B cell (primary cell): ENCODE measurements at regions of chr11 and their contacts with region 1.

Region 1: DNA sequence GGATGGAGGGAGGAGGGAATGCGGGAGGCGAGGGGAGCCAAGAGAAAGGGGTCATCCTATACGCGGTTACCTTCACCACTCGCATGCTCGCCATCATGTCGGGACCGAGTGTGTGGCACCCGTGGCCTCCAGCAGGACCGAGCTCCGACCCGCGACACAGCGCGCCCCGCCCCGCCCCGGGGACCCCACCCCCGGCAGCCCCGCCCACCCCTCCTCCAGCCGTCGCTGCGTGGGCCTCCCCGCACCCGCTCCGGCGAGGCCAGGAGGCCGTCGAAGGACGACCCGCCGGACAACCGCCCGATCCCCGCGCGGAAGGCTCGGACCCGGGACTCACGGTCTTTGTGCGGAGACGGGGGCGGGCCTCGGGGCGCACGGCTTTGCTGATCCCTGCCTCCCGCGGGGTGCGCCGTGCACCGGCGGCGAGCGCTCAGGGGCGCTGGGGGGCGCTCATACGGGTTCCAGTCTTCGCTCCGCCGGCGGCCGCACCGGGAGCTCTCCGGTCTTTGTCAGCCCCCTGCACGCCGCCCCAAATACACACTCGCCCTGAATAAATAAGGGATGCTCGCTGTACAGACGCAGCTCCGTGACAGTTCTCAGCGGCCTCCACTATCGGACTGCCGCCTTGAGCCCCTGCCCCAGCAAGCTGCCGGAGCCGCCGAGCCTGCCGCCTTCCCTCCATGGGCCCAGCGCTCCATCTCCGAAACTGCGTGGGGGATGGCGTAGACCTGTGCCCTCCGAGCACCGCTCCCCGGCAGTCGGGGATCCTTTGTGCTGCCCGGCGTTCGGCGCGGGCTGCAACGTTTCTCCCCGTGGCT is at the start of gene UBE2L6:
- DNase-seq: peak; percentile 82
- ATAC-seq: peak; percentile 69
- H3K4me3 ChIP-seq: peak within 1 kb of the TSS; percentile 83 to 99 (median 98)
- H3K4me3 Mint-ChIP-seq: peak within 1 kb of the TSS; percentile 99
- H3K27ac ChIP-seq: peak within 1 kb of the TSS; percentile 83 to 92
- H3K27ac Mint-ChIP-seq: peak within 1 kb of the TSS; percentile 99
- H3K4me1 ChIP-seq: peaks cover 18 to 26% of the 10 kb centered on the region in 2 donors
- H3K4me1 Mint-ChIP-seq: peaks cover 36% of the 10 kb centered on the region
- H3K27me3 ChIP-seq: no peaks in the 10 kb centered on the region
- H3K27me3 Mint-ChIP-seq: no peaks in the 10 kb centered on the region
- CTCF ChIP-seq: peak; percentile 95
- total RNA-seq, gene UBE2L6: 66.3 and 70.7 TPM in 2 replicates

Region 2: DNA sequence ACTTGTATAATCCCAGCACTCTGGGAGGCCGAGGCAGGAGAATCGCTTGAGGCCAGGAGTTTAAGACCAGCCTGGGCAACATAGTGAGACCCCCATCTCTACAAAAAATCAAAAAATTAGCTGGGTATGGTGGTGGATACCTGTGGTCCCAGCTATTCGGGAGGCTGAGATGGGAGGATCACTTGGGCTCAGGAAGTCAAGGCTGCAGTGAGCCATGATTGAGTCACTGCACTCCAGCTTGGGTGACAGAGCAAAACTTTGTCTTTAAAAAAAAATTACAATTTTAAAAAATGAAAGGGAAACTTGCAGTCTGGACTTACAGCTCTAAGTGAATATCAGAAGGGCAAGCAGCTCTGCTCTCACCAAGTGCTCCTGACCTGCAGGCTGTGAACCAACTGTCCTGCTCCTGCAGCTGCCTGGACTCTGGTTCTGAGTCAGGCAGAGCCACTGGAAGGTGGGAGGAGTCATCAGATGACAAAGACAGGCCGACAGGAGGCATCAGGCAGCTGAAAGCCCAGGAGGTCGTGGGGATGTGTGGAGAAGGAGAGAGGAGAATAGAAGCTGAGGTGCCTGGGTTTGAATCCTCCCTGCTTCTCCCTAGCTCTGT is 20.8 kb before region 1 on chr11:
- CTCF ChIA-PET with region 1: interaction called, 14 read pairs
- POLR2A ChIA-PET with region 1: interaction called, 5 read pairs
- intact Hi-C with region 1: loop called (anchors 1 kb)
- DNase-seq: no peak
- ATAC-seq: no peak
- H3K4me3 ChIP-seq: no peak overlapping the region
- H3K4me3 Mint-ChIP-seq: no peak overlapping the region
- H3K27ac ChIP-seq: peak overlapping the region; percentile 62 to 83
- H3K27ac Mint-ChIP-seq: peak overlapping the region; percentile 89
- H3K4me1 ChIP-seq: peaks cover 11 to 16% of the 10 kb centered on the region in 2 donors
- H3K4me1 Mint-ChIP-seq: peaks cover 15% of the 10 kb centered on the region
- H3K27me3 ChIP-seq: no peaks in the 10 kb centered on the region
- H3K27me3 Mint-ChIP-seq: no peaks in the 10 kb centered on the region
- CTCF ChIP-seq: no peak

Region 3: GRCh38 chr11:57657194-57658022 is 89.7 kb after region 1 on chr11 and contains the start of gene CLP1:
- CTCF ChIA-PET with region 1: interaction called, 4 read pairs
- POLR2A ChIA-PET with region 1: no interaction called
- intact Hi-C with region 1: loop called (anchors 1 kb)
- DNase-seq: peak; percentile 98
- ATAC-seq: peak; percentile 97
- H3K4me3 ChIP-seq: peak within 1 kb of the TSS; percentile 68 to 95 (median 92)
- H3K4me3 Mint-ChIP-seq: peak within 1 kb of the TSS; percentile 94
- H3K27ac ChIP-seq: peak within 1 kb of the TSS; percentile 77 to 92
- H3K27ac Mint-ChIP-seq: peak within 1 kb of the TSS; percentile 94
- H3K4me1 ChIP-seq: peaks cover 8 to 14% of the 10 kb centered on the region in 2 donors
- H3K4me1 Mint-ChIP-seq: peaks cover 28% of the 10 kb centered on the region
- H3K27me3 ChIP-seq: no peaks in the 10 kb centered on the region
- H3K27me3 Mint-ChIP-seq: no peaks in the 10 kb centered on the region
- CTCF ChIP-seq: no peak
- total RNA-seq, gene CLP1: 15.5 and 15.8 TPM in 2 replicates

Region 4: DNA sequence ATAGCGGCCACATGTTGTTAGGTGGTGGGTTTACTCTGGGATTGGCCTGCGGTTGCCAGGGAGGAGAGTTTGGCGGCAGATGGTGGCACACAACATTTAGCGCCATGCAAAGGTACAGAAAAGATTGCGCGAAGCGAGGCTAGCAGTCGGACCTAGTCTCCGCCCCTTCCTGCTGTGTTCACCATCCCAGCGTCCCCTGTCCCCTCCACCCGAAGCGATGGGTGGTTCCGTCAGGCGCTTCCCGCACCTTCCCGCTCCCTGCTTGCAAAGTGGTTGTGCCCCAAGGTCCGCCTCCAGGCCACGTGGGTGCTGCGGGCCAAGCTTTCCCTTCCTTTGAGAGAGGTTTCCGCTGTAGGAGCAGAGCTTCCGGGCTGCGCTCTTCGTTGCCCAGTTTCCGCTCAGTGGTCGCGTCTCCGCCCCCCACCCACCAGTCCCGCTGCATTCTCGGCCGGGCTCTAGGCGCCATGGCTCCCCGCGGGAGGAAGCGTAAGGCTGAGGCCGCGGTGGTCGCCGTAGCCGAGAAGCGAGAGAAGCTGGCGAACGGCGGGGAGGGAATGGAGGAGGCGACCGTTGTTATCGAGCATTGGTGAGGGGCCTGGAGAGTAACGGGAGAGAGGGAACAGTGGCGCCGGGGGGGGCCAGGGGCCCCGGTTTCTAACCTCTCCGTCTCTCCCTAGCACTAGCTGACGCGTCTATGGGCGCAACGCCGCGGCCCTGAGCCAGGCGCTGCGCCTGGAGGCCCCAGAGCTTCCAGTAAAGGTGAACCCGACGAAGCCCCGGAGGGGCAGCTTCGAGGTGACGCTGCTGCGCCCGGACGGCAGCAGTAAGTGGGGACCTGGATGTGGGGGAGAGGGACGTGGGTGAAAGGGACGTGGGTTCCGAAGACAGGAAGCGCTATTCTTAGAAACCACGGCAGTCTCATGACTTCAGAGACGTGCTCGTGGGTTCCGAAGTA is 173.7 kb after region 1 on chr11 and contains the start of gene SELENOH:
- CTCF ChIA-PET with region 1: interaction called, 5 read pairs
- POLR2A ChIA-PET with region 1: no interaction called
- intact Hi-C with region 1: loop called (anchors 5 kb)
- DNase-seq: peak; percentile 93
- ATAC-seq: peak; percentile 83
- H3K4me3 ChIP-seq: peak within 1 kb of the TSS; percentile 83 to 97 (median 94)
- H3K4me3 Mint-ChIP-seq: peak within 1 kb of the TSS; percentile 99
- H3K27ac ChIP-seq: peak within 1 kb of the TSS; percentile 90 to 97
- H3K27ac Mint-ChIP-seq: peak within 1 kb of the TSS; percentile 99
- H3K4me1 ChIP-seq: peaks cover 11 to 32% of the 10 kb centered on the region in 2 donors
- H3K4me1 Mint-ChIP-seq: peaks cover 38% of the 10 kb centered on the region
- H3K27me3 ChIP-seq: no peaks in the 10 kb centered on the region
- H3K27me3 Mint-ChIP-seq: no peaks in the 10 kb centered on the region
- CTCF ChIP-seq: no peak
- total RNA-seq, gene SELENOH: 147 and 153 TPM in 2 replicates